HEK293T (cell line): ENCODE measurements at regions of chr17 and their contacts with region 1.

Region 1: DNA sequence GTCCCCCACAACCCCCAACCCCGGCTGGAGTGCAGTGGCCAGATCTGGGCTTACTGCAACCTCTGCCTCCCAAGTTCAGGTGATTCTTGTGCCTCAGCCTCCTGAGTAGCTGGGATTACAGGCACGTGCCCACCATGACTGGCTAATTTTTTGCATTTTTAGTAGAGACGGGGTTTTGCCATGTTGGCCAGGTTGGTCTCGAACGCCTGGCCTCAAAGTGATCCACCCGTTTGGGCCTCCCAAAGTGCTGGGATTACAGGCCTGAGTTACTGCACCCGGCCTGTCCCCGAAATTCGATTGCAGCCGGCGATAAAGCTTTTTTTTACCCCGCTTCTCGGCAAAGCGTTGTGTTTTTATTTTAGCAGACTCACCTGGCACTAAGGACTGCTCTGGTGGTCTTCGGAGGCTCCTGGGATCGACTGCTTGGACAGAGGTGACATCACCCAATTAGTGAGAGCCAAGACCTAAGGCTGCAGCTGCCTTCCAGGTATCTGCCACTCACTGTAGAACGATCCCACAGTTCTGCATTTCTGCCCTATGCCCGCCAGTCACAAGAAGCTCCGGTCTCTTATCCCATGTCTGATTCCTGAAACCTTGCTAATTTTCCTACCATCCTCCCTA is 82.2 kb upstream of the ARL4D start:
- DNase-seq: no peak

Region 2: GRCh38 chr17:43125133-43125966 is 191.3 kb before region 1 on chr17 and contains the start of gene BRCA1:
- CTCF ChIA-PET with region 1: no interaction called
- POLR2A ChIA-PET with region 1: interaction called, 20 read pairs
- DNase-seq: peak; percentile 97

Region 3: DNA sequence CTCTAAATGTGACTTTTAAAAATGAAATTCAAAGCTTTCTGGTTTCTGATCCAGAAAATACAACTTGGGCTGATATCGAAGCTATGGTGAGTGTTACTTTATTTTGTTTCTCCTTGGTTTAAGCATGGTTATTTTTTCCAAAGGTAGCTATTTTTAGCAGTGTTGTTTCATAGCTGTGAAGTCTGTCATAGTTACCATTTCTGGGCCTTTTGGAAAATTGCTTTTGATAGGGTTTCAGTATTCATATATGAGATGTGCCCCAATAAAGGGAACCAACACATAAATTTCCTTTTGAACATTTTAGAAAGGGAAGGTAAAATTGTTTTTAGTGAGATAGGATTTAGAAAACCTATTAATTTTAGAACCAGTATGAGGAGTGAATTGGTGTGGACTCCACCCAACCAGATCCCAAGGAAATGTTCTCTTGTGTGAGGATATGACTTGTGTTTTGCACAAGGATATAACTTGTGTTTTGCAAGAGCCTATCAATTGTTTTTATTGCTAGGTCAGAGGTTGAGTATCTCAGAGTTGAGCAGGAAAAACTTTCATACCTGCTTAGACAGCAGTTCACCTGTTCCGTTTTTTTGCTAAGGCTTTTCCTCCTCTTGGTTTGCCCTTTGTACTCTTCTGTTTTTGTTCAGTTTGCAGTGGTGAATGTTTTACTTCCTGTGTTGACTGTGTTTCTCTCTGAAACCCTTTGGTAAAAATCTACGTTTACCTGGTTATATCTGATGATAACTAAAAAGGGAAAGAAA is 140.6 kb before region 1 on chr17:
- CTCF ChIA-PET with region 1: interaction called, 3 read pairs
- POLR2A ChIA-PET with region 1: interaction called, 49 read pairs
- DNase-seq: no peak

Region 4: GRCh38 chr17:43200127-43200526 is 116.5 kb before region 1 on chr17:
- CTCF ChIA-PET with region 1: no interaction called
- POLR2A ChIA-PET with region 1: interaction called, 16 read pairs
- DNase-seq: no peak

Region 5: GRCh38 chr17:43219746-43220380 is 96.8 kb before region 1 on chr17:
- CTCF ChIA-PET with region 1: no interaction called
- POLR2A ChIA-PET with region 1: interaction called, 47 read pairs
- DNase-seq: no peak

Region 6: GRCh38 chr17:43360739-43361505 is 44.3 kb after region 1 on chr17:
- CTCF ChIA-PET with region 1: no interaction called
- POLR2A ChIA-PET with region 1: interaction called, 14 read pairs
- DNase-seq: no peak

Region 7: DNA sequence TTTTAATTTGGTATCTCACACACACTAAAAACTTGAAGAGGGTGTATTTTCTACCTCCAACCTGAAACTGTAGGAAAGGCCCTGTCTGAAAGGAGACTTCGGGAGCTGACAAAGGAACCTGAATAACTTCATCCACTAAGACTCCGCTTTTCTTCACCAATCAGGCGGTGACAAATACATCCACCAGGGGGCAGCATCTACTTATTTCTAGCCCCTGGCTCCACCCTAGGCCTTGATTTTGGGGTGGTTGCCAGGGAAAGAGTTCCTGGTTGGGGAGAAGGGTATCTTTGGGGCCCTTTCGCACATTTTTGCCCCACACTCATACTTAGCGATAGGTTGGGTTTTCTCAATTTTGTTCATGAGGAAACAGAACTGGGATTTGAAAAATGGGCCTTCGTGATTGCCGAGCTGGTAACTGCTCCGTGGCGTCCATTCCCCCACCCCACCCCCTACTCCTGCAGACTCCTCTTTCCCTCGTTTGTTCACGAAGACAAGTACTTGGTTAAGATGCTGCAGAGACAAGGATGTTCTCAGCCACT is 77.4 kb after region 1 on chr17:
- CTCF ChIA-PET with region 1: no interaction called
- POLR2A ChIA-PET with region 1: interaction called, 11 read pairs
- DNase-seq: peak; percentile 79

Region 8: DNA sequence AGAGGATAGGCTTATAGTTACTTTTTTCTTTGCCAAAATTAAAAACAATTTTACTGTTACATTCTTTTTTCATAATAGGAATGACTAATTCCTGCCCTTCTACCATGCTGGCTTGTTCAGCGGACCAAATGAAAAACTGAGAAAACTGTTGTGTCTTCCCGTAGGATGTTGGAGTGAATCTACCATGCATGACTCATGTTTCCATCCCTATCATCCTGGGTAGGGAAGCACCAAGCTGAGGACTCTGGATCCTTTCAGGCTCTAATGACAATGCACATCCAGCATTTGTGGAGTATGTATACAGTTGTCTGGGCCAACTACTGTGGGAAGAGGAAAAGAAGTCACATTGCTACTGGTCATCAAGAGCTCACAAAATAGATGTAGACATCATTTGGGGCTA is 126.1 kb after region 1 on chr17:
- CTCF ChIA-PET with region 1: no interaction called
- POLR2A ChIA-PET with region 1: no interaction called
- DNase-seq: no peak